RWPE1 (cell line): ENCODE measurements at regions of chr12 and their contacts with region 1.

Region 1: GRCh38 chr12:101969-102878 is 35.7 kb downstream of the IQSEC3 start:
- DNase-seq: no peak
- H3K27ac ChIP-seq: no peak overlapping the region
- CTCF ChIP-seq: no peak

Region 2: GRCh38 chr12:218221-218620 is 116.0 kb after region 1 on chr12:
- CTCF ChIA-PET with region 1: no interaction called
- POLR2A ChIA-PET with region 1: interaction called, 13 read pairs
- DNase-seq: no peak
- H3K27ac ChIP-seq: no peak overlapping the region
- CTCF ChIP-seq: no peak